CD4-positive, alpha-beta T cell (primary cell): ENCODE measurements at regions of chr7 and their contacts with region 1.

Region 1: GRCh38 chr7:11394438-11394837 is 420.8 kb downstream of the PHF14 start:
- DNase-seq: no peak
- ATAC-seq: no peak
- H3K4me3 ChIP-seq: no peak overlapping the region
- H3K4me3 Mint-ChIP-seq: no peak overlapping the region
- H3K27ac ChIP-seq: no peak overlapping the region
- H3K27ac Mint-ChIP-seq: no peak overlapping the region
- H3K4me1 ChIP-seq: no peaks in the 10 kb centered on the region
- H3K4me1 Mint-ChIP-seq: no peaks in the 10 kb centered on the region
- H3K27me3 ChIP-seq: no peaks in the 10 kb centered on the region
- H3K27me3 Mint-ChIP-seq: no peaks in the 10 kb centered on the region
- CTCF ChIP-seq: no peak

Region 2: GRCh38 chr7:11332186-11332864 is 62.1 kb before region 1 on chr7:
- CTCF ChIA-PET with region 1: no interaction called
- POLR2A ChIA-PET with region 1: no interaction called
- intact Hi-C with region 1: loop called in 1 of 2 experiments (anchors 10 kb)
- DNase-seq: no peak
- ATAC-seq: no peak
- H3K4me3 ChIP-seq: no peak overlapping the region
- H3K4me3 Mint-ChIP-seq: no peak overlapping the region
- H3K27ac ChIP-seq: no peak overlapping the region
- H3K27ac Mint-ChIP-seq: no peak overlapping the region
- H3K4me1 ChIP-seq: no peaks in the 10 kb centered on the region
- H3K4me1 Mint-ChIP-seq: no peaks in the 10 kb centered on the region
- H3K27me3 ChIP-seq: no peaks in the 10 kb centered on the region
- H3K27me3 Mint-ChIP-seq: no peaks in the 10 kb centered on the region
- CTCF ChIP-seq: no peak

Region 3: GRCh38 chr7:11557627-11558026 is 163.2 kb after region 1 on chr7:
- CTCF ChIA-PET with region 1: no interaction called
- POLR2A ChIA-PET with region 1: no interaction called
- intact Hi-C with region 1: loop called in 1 of 2 experiments (anchors 5 kb)
- DNase-seq: peak in 2 of 14 experiments; percentile 6 to 16
- ATAC-seq: no peak
- H3K4me3 ChIP-seq: no peak overlapping the region
- H3K4me3 Mint-ChIP-seq: no peak overlapping the region
- H3K27ac ChIP-seq: no peak overlapping the region
- H3K27ac Mint-ChIP-seq: no peak overlapping the region
- H3K4me1 ChIP-seq: no peaks in the 10 kb centered on the region
- H3K4me1 Mint-ChIP-seq: no peaks in the 10 kb centered on the region
- H3K27me3 ChIP-seq: no peaks in the 10 kb centered on the region
- H3K27me3 Mint-ChIP-seq: no peaks in the 10 kb centered on the region
- CTCF ChIP-seq: no peak

Region 4: GRCh38 chr7:11835260-11835659 is 440.8 kb after region 1 on chr7:
- CTCF ChIA-PET with region 1: no interaction called
- POLR2A ChIA-PET with region 1: no interaction called
- intact Hi-C with region 1: no loop called
- DNase-seq: no peak
- ATAC-seq: no peak
- H3K4me3 ChIP-seq: no peak overlapping the region
- H3K4me3 Mint-ChIP-seq: no peak overlapping the region
- H3K27ac ChIP-seq: no peak overlapping the region
- H3K27ac Mint-ChIP-seq: no peak overlapping the region
- H3K4me1 ChIP-seq: peaks cover 2% of the 10 kb centered on the region
- H3K4me1 Mint-ChIP-seq: peaks cover 10% of the 10 kb centered on the region
- H3K27me3 ChIP-seq: peaks cover 6 to 25% of the 10 kb centered on the region in 2 experiments
- H3K27me3 Mint-ChIP-seq: peaks cover 30% of the 10 kb centered on the region
- CTCF ChIP-seq: no peak